ENCODE measurements at regions of chr22 and their contacts with region 1.

Region 1: DNA sequence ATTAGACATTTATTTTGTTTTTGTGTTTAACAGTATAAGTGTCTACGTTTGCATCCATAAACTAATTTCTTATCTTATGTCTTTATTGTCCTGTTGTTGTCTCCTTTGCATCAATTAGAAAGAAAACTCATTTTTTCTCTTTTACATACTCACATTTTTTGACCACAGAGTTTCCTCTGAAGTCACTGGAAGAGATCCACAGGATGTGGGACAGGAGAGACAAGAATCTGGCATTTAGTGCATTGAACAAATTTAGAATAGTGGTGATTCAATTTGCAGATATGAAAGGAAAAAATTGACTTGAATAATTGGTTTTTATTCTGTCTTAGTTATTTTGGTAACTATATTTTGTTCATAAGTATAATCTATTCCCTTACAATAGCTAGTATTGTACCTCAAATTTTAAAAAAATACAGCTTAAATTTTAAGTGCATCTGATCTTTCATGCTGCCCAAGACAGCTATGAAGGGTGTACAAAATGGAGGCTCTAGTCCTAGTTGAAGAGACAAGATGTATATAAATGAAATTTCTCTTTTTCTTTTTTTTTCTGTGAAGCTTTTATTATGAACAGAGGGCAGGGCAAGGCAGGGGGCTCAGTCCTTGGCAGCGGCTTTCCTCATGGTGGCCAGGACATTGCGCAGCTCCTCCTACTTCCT is 24.4 kb downstream of the HORMAD2 start:
- DNase-seq: peak; percentile 22
- ATAC-seq: peak; percentile 75
- H3K4me3 Mint-ChIP-seq: no peak overlapping the region
- H3K27ac Mint-ChIP-seq: peak overlapping the region; percentile 81
- H3K4me1 Mint-ChIP-seq: peaks cover 33% of the 10 kb centered on the region
- H3K27me3 Mint-ChIP-seq: peaks cover 3% of the 10 kb centered on the region
- CTCF ChIP-seq: no peak

Region 2: DNA sequence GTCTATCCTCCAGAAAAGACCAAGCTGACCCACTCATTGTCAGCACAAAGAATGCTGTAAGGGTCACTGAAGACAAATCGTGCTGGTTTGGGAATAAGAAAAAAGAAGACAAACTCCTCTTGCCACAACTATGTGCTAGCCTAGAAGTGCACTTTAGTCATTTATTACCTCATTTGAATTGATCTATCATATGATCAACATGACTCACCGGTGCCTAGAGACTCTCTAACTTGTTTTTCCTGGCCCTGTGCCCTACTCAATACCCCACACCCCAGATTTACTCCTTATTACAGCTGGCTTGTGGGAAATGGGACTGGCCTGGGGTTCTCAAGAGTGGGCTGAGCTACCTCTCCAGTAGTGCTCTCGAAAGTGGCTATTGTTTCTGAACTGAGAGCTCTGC is 60.3 kb before region 1 on chr22:
- CTCF ChIA-PET with region 1: no interaction called
- POLR2A ChIA-PET with region 1: no interaction called
- intact Hi-C with region 1: no loop called
- DNase-seq: no peak
- ATAC-seq: no peak
- H3K4me3 Mint-ChIP-seq: no peak overlapping the region
- H3K27ac Mint-ChIP-seq: no peak overlapping the region
- H3K4me1 Mint-ChIP-seq: peaks cover 8% of the 10 kb centered on the region
- H3K27me3 Mint-ChIP-seq: peaks cover 2% of the 10 kb centered on the region
- CTCF ChIP-seq: no peak

Region 3: DNA sequence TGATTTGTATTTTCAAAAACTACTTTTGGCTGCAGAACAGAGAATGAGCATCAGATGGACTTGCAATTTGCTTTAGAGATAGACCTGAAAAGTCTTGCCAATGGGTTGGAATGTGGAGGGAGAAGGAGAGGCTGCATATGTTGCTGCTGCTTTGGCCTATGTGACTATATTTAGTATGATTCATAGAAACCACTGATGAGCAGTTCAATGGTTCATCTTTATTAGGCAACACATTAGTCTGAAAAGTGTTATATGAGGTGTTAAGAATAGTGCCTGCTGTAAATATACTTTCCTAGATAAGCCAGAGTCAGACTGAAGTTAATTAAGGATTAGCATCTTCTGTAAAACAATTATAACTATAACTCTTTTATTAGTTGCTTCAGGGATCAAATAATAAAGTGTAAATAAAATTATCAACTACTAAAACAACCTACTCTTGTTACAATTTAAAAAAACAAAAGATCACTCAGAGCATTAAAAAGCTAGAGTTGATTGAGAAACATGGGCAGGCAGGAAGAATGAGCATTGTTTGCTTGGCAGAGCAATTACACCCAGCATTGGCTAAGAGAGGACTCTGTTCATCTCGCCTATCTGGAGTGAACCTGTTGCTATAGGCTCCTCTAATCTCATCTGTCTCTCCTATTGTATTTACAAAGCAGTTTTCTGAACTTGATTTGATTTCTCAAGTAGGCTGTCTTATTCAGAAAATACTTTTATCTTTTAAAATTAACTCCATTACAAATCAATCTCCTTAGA is 11.9 kb after region 1 on chr22:
- CTCF ChIA-PET with region 1: interaction called, 61 read pairs
- POLR2A ChIA-PET with region 1: no interaction called
- intact Hi-C with region 1: no loop called
- DNase-seq: no peak
- ATAC-seq: peak; percentile 74
- H3K4me3 Mint-ChIP-seq: no peak overlapping the region
- H3K27ac Mint-ChIP-seq: no peak overlapping the region
- H3K4me1 Mint-ChIP-seq: peaks cover 13% of the 10 kb centered on the region
- H3K27me3 Mint-ChIP-seq: peaks cover 6% of the 10 kb centered on the region
- CTCF ChIP-seq: no peak

Region 4: DNA sequence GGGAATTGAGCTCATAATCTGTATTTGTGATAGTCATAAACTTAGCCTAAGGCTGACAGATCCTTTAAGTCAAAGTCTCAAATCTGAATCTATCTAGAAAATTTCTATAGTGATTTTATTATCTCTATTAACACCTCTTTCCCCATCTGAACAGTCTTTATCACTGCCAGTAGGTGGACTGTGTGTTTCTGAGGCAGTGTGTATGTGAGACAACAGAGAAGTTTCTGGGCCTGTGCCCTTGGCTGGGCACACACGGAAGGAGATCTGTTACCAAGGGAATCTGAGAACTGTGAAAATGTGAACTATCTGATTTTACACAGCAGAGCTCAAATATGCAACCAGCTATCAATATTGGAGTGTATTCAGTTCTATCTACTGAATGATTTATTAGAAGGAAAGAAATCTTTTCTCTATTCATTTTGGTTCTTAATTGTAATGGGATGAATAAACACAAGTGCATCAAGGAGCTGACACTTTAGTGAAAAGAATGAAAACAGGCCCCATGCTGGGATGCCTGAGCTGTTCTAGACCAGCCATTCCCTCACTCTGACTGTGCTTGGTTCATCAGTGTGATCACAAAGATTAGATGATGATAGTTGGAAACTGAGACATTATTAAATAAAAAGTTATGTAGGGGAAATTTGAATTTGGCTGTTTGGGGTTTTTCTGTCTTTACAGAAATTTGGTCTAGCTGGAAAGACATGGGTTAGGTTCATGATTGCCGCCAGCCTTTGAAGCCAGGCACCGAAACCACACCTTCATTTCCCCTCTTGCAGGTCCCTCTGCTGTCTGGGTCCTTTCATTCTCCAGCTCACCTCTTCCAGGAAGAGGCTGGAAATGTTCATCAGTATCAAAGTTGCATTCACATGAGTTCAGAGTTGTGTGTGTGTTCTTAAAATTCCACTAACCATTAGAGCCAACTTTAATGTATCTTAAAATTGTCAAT is 73.8 kb after region 1 on chr22:
- CTCF ChIA-PET with region 1: interaction called, 22 read pairs
- POLR2A ChIA-PET with region 1: interaction called, 4 read pairs
- intact Hi-C with region 1: loop called (anchors 5 kb)
- DNase-seq: peak; percentile 76
- ATAC-seq: peak; percentile 81
- H3K4me3 Mint-ChIP-seq: peak overlapping the region; percentile 26
- H3K27ac Mint-ChIP-seq: peak overlapping the region; percentile 94
- H3K4me1 Mint-ChIP-seq: peaks cover 62% of the 10 kb centered on the region
- H3K27me3 Mint-ChIP-seq: no peaks in the 10 kb centered on the region
- CTCF ChIP-seq: peak; percentile 45

Region 5: DNA sequence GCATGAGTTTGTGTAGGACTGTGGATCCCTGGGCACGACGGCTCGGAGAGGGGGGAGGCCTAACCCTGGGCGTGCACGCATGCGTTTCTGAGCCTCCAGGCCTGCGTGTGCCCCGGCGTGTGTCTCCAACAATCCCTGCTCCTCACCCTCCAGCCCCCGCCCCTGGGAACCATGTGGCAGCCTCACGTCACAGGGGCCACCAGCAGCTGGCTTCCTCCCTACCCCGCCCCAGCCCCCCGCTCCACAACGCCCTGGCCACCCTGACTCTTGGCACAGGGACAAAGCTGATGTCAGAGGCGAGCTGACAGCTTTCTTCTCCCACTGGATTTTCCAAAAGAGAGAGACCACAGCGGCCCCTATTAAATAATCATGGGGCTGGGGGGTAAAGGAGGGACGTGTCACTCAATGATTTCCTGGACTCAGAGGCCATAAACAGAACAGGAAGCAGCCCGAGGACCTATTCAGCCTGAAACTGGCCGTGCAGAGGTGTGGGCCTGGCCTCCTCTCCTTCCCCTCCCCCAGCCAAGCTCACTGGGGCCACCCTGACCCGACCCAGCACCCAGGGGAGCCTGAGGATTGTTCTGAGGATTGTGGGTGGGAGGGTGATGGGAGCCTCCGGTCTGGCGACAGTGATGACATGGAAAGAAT is 148.7 kb after region 1 on chr22:
- CTCF ChIA-PET with region 1: interaction called, 14 read pairs
- POLR2A ChIA-PET with region 1: interaction called, 3 read pairs
- intact Hi-C with region 1: loop called (anchors 2 kb)
- DNase-seq: no peak
- ATAC-seq: no peak
- H3K4me3 Mint-ChIP-seq: no peak overlapping the region
- H3K27ac Mint-ChIP-seq: no peak overlapping the region
- H3K4me1 Mint-ChIP-seq: peaks cover 46% of the 10 kb centered on the region
- H3K27me3 Mint-ChIP-seq: peaks cover 3% of the 10 kb centered on the region
- CTCF ChIP-seq: no peak

Region 6: DNA sequence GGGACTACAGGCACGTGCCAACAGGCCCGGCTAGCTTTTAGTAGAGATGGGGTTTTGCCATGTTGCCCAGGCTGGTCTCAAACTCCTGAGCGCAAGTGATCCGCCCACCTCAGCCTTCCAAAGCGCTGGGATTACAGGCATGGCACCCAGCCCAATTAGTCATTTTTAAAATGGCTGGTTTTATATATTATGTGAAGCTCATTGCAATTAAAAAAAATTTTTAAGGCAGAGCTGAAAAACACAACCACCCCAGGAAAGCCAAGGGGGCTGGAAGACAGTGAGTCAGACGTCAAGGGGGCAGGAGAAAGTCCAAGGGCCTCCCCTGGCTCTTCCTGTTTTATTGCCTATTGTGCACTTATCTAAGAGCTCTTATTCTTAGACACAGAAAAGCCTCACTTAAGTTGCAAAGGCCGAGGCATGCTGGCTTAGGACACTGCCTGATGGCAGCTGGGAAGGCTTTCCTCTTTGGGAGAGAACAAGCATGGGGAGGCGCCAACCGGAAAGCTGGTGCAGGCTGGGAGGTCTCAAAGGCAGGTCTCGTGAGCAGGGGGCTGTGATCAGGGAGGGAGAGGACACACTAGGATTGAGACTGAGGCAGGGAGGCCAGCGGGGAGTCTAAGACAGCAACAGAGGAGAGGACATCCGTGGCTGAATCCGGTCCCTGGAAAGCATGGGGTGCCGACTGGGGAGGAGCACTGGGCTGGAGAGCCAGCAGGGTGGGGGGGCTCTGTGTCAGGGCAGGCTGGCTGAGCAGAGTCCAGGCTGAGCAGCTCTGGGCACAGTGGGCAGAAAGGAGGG is 173.1 kb after region 1 on chr22:
- CTCF ChIA-PET with region 1: interaction called, 16 read pairs
- POLR2A ChIA-PET with region 1: no interaction called
- intact Hi-C with region 1: loop called (anchors 10 kb)
- DNase-seq: no peak
- ATAC-seq: no peak
- H3K4me3 Mint-ChIP-seq: no peak overlapping the region
- H3K27ac Mint-ChIP-seq: no peak overlapping the region
- H3K4me1 Mint-ChIP-seq: peaks cover 46% of the 10 kb centered on the region
- H3K27me3 Mint-ChIP-seq: no peaks in the 10 kb centered on the region
- CTCF ChIP-seq: no peak

Measured in activated CD8-positive, alpha-beta T cell treated with anti-CD3 and anti-CD28 coated beads for 36 hours (primary cell).